ENCODE measurements at regions of chr9 and their contacts with region 1.

Region 1: DNA sequence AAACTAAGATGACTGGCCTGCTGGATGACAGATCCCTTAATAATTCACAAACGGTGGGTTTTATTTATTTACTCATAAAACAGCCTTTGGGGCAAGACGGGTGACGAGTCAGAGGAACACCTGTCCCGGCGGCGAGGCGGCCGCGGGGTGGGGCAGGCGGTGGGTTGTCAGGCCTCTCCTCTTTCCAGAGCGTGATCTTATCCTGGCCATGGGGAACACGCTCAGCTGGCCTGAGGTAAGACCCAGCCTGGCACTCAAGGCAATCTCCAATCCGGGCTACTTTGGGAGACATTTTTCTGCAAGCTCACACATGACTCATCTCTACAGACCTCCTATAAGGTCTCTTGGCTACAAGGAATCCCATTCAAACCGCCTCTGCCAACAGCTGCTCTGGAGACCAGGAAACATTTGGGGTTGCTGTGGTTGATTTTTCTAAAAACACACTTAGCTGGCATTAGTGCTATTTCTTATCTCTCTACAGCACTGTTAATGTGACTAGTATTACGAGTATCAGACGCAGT is 6.3 kb downstream of the RAPGEF1 start:
- DNase-seq: peak in 2 of 9 donors; percentile 14 to 57
- ATAC-seq: peak; percentile 5
- H3K4me3 ChIP-seq: peak overlapping the region; percentile 46
- H3K4me3 Mint-ChIP-seq: peak overlapping the region; percentile 76 to 89 (median 82)
- H3K27ac ChIP-seq: peak overlapping the region; percentile 73
- H3K27ac Mint-ChIP-seq: peak overlapping the region; percentile 84 to 99 (median 90)
- H3K4me1 ChIP-seq: peaks cover 84 to 85% of the 10 kb centered on the region in 2 donors
- H3K4me1 Mint-ChIP-seq: peaks cover 70 to 93% (median 89%) of the 10 kb centered on the region in 7 donors
- H3K27me3 ChIP-seq: no peaks in the 10 kb centered on the region
- H3K27me3 Mint-ChIP-seq: no peaks in the 10 kb centered on the region

Region 2: GRCh38 chr9:131270171-131271015 is 463.2 kb before region 1 on chr9:
- CTCF ChIA-PET with region 1: no interaction called
- POLR2A ChIA-PET with region 1: no interaction called
- intact Hi-C with region 1: loop called in 1 of 2 experiments (anchors 5 kb)
- DNase-seq: peak in 8 of 9 donors; percentile 49 to 70 (median 64)
- ATAC-seq: peak; percentile 16
- H3K4me3 ChIP-seq: peak overlapping the region; percentile 74
- H3K4me3 Mint-ChIP-seq: peak overlapping the region; percentile 83 to 100 (median 92)
- H3K27ac ChIP-seq: peak overlapping the region; percentile 96
- H3K27ac Mint-ChIP-seq: peak overlapping the region; percentile 95 to 100 (median 99)
- H3K4me1 ChIP-seq: peaks cover 50 to 63% of the 10 kb centered on the region in 2 donors
- H3K4me1 Mint-ChIP-seq: peaks cover 30 to 61% (median 50%) of the 10 kb centered on the region in 7 donors
- H3K27me3 ChIP-seq: no peaks in the 10 kb centered on the region
- H3K27me3 Mint-ChIP-seq: no peaks in the 10 kb centered on the region

Region 3: GRCh38 chr9:131635285-131635684 is 98.3 kb before region 1 on chr9:
- CTCF ChIA-PET with region 1: interaction called, 10 read pairs
- POLR2A ChIA-PET with region 1: interaction called, 7 read pairs
- intact Hi-C with region 1: loop called (anchors 1 to 2 kb)
- DNase-seq: peak; percentile 34 to 76 (median 60)
- ATAC-seq: peak; percentile 98
- H3K4me3 ChIP-seq: no peak overlapping the region
- H3K4me3 Mint-ChIP-seq: peak overlapping the region in 3 of 10 donors; percentile 5 to 50 (median 11)
- H3K27ac ChIP-seq: peak overlapping the region; percentile 36
- H3K27ac Mint-ChIP-seq: peak overlapping the region; percentile 70 to 89 (median 85)
- H3K4me1 ChIP-seq: peaks cover 12 to 20% of the 10 kb centered on the region in 2 donors
- H3K4me1 Mint-ChIP-seq: peaks cover 15 to 51% (median 19%) of the 10 kb centered on the region in 7 donors
- H3K27me3 ChIP-seq: no peaks in the 10 kb centered on the region
- H3K27me3 Mint-ChIP-seq: no peaks in the 10 kb centered on the region

Region 4: GRCh38 chr9:131709771-131710454 is 23.7 kb before region 1 on chr9:
- CTCF ChIA-PET with region 1: interaction called, 5 read pairs
- POLR2A ChIA-PET with region 1: interaction called, 8 read pairs
- intact Hi-C with region 1: loop called (anchors 1 to 2 kb)
- DNase-seq: peak in 7 of 9 donors; percentile 15 to 52 (median 34)
- ATAC-seq: peak; percentile 88
- H3K4me3 ChIP-seq: no peak overlapping the region
- H3K4me3 Mint-ChIP-seq: peak overlapping the region in 9 of 10 donors; percentile 10 to 71 (median 38)
- H3K27ac ChIP-seq: peak overlapping the region; percentile 42
- H3K27ac Mint-ChIP-seq: peak overlapping the region; percentile 51 to 99 (median 81)
- H3K4me1 ChIP-seq: peaks cover 19 to 34% of the 10 kb centered on the region in 2 donors
- H3K4me1 Mint-ChIP-seq: peaks cover 47 to 82% (median 71%) of the 10 kb centered on the region in 7 donors
- H3K27me3 ChIP-seq: no peaks in the 10 kb centered on the region
- H3K27me3 Mint-ChIP-seq: no peaks in the 10 kb centered on the region

Region 5: GRCh38 chr9:131788341-131788740 is 54.7 kb after region 1 on chr9:
- CTCF ChIA-PET with region 1: no interaction called
- POLR2A ChIA-PET with region 1: no interaction called
- intact Hi-C with region 1: no loop called
- DNase-seq: no peak
- ATAC-seq: no peak
- H3K4me3 ChIP-seq: no peak overlapping the region
- H3K4me3 Mint-ChIP-seq: no peak overlapping the region
- H3K27ac ChIP-seq: no peak overlapping the region
- H3K27ac Mint-ChIP-seq: no peak overlapping the region
- H3K4me1 ChIP-seq: no peaks in the 10 kb centered on the region
- H3K4me1 Mint-ChIP-seq: peaks cover 0 to 3% (median 0%) of the 10 kb centered on the region in 7 donors
- H3K27me3 ChIP-seq: peaks cover 0 to 2% of the 10 kb centered on the region in 2 donors
- H3K27me3 Mint-ChIP-seq: peaks cover 21 to 69% (median 35%) of the 10 kb centered on the region in 5 donors

Measured in naive thymus-derived CD4-positive, alpha-beta T cell (primary cell).